ENCODE measurements at regions of chr14 and their contacts with region 1.

Region 1: GRCh38 chr14:93654599-93654998 is 133.7 kb downstream of the PRIMA1 start:
- DNase-seq: no peak
- H3K4me3 ChIP-seq: no peak overlapping the region
- H3K27ac ChIP-seq: no peak overlapping the region
- H3K4me1 ChIP-seq: no peaks in the 10 kb centered on the region
- H3K27me3 ChIP-seq: peaks cover 0 to 3% (median 0%) of the 10 kb centered on the region in 4 donors
- CTCF ChIP-seq: no peak
- POLR2A ChIP-seq: no peak

Region 2: DNA sequence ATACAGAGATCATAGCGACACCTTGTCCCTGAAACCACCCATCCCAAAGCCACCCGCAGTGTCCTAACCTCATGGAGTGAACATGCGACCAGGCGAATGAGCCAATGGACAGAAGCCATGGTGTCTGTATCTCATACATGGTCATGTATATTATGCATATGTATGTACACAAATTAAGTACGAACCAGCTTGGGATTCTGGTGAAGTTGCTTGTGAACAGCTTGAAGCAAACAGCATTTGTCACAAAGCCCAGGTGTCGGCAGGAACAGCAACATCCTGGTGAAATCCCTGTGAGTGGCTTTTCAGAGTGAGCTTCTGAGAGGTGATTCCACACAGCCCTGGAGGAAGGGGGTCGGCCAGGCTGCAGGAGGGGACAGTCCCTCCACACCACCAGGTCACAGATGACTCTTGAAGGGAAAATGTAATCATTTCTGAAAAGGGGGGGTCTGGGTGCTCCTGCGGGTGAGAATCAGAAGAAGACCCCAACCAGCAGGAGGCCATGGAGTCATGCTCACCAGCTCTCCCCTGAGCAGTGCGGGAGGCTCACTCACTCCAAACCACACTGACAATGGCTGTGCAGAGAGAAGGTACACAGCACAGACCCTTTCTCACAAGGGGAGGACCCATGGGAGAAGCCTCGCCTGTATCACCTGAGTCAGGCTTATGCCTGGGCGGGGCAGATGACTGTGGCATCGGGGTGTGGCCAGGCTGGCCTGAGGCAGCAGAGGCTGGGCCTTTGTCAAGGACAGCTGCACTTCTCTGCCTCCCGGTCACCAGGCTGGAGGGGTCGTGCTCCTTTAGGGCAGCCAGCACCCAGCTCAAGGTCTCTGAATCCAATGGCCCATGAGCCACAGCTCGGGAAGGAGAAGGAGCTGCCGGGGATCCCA is 717.3 kb before region 1 on chr14:
- intact Hi-C with region 1: no loop called
- DNase-seq: no peak
- H3K4me3 ChIP-seq: no peak overlapping the region
- H3K27ac ChIP-seq: no peak overlapping the region
- H3K4me1 ChIP-seq: peaks cover 0 to 27% (median 0%) of the 10 kb centered on the region in 3 donors
- H3K27me3 ChIP-seq: no peaks in the 10 kb centered on the region
- CTCF ChIP-seq: no peak
- POLR2A ChIP-seq: no peak

Region 3: GRCh38 chr14:93892923-93893558 is 238.4 kb after region 1 on chr14:
- intact Hi-C with region 1: loop called (anchors 5 kb)
- DNase-seq: no peak
- H3K4me3 ChIP-seq: peak overlapping the region in 1 of 4 donors; percentile 34
- H3K27ac ChIP-seq: peak overlapping the region in 3 of 4 donors; percentile 37 to 68 (median 66)
- H3K4me1 ChIP-seq: peaks cover 0 to 25% (median 7%) of the 10 kb centered on the region in 3 donors
- H3K27me3 ChIP-seq: peaks cover 0 to 33% (median 0%) of the 10 kb centered on the region in 4 donors
- CTCF ChIP-seq: peak; percentile 91 to 100 (median 94)
- POLR2A ChIP-seq: no peak